HCT116 (cell line): ENCODE measurements at regions of chr6 and their contacts with region 1.

Region 1: DNA sequence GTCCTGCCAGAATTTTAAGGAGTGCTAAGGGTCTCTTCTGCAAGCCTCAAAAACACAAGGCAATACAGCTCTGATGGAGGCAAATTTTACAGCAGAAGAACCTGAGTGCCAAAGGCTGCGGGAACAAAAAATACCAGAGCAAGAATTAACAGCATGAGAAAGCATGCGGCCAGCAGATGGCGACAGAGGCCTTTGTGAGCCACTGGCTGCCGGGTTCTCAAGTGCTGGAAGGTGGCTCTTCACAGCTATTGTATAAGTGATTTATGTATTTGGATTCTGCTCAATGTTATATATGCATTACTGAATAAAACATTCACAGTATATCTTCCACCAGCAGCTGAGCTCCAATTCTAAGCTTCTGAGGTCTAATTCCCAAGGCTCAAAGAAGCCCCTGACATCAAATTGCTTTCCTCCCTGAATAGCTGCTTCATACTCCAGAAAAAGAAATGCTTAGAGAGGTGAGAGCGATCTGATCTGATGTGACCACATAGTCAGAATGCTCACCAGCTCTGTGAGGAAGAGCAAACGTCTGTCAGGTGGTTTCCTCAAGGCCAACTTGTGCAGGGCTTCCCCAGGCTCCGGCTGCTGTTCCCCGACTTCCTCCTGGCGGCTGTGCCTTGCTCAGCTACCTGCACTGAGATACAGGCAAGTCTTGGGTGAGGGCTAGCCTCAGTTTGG is 58.6 kb downstream of the PPP1R3G start:
- DNase-seq: peak; percentile 46
- ATAC-seq: peak; percentile 83
- H3K4me3 ChIP-seq: no peak overlapping the region
- H3K27ac ChIP-seq: no peak overlapping the region
- H3K4me1 ChIP-seq: no peaks in the 10 kb centered on the region
- H3K27me3 ChIP-seq: no peaks in the 10 kb centered on the region
- CTCF ChIP-seq: peak; percentile 73 to 96 (median 85)
- POLR2A ChIP-seq: no peak
- RAD21 ChIP-seq: peak; percentile 91

Region 2: DNA sequence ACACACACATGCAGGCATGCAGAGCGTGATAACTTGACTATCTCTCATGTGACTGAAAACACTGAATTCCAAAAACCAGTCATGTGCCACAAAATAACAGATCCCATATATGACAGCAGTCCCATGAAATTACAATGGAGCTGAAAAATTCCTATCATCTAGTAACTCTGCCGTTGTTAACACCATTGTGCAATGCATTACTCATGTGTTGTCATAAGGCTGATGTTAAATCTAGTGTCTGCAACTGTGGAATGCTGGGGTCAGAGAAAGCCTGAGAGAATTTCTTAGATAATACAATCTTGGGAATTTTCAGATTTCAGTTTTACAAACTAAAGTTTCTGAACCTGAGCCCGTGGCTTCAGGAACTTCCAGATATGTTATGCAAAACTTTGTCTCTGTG is 46.7 kb after region 1 on chr6:
- CTCF ChIA-PET with region 1: no interaction called
- POLR2A ChIA-PET with region 1: no interaction called
- RAD21 ChIA-PET with region 1: no interaction called
- intact Hi-C with region 1: no loop called
- DNase-seq: no peak
- ATAC-seq: no peak
- H3K4me3 ChIP-seq: no peak overlapping the region
- H3K27ac ChIP-seq: no peak overlapping the region
- H3K4me1 ChIP-seq: peaks cover 0 to 5% of the 10 kb centered on the region in 2 experiments; a peak in 1 of 4 replicates
- H3K27me3 ChIP-seq: no peaks in the 10 kb centered on the region
- CTCF ChIP-seq: no peak
- POLR2A ChIP-seq: no peak
- RAD21 ChIP-seq: no peak

Region 3: DNA sequence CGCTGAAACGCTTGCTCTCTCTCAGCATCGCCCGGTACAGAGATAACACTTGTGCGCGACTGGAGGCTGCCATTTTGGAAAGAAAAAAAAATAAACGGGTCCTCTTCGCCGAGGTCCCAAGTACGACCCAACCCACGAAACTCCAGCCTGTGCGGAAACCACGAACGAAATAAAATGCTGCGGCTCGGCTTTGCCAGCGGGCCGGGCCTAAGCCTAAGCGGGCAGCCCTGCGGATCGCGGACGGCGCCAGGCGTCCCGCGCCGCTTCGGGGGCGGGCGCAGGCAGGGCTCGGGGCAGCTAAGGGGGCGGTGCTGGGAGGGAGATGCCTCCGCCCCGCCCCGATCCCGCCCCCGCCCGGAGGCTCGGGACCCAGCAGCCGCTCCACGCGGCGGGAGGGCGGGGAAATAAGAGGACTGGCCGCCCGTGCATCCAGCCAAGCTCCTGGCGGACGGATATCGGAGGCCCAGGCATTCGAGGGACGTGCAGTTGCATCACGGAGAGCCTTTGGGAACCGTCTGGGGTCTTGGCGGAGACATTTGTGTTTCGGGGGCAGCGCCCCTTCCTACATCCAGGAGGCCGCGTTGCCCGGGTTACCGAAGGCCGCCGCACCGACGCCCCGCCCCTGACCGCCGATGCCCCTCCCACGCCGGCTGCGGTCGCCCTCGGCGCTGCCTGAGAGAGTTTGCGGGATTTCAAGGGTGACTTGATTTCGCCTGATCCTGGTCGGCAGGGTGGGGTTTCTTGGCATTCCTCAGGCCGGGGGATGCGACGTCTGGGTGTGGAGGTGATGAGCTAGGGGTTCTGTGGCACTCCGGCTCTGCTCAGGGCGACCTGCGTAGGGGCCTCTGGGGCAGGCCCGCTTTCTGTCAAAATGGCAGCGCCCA is 117.1 kb after region 1 on chr6 and contains the starts of genes FARS2 and LYRM4:
- CTCF ChIA-PET with region 1: no interaction called
- POLR2A ChIA-PET with region 1: no interaction called
- RAD21 ChIA-PET with region 1: interaction called in 1 of 2 experiments, 5 read pairs
- intact Hi-C with region 1: loop called (anchors 2 kb)
- DNase-seq: peak; percentile 72
- ATAC-seq: peak; percentile 80
- H3K4me3 ChIP-seq: peak within 1 kb of the TSS; percentile 77 to 92
- H3K27ac ChIP-seq: peak within 1 kb of the TSS; percentile 97
- H3K4me1 ChIP-seq: peaks cover 9 to 14% of the 10 kb centered on the region in 2 experiments
- H3K27me3 ChIP-seq: no peaks in the 10 kb centered on the region
- CTCF ChIP-seq: peak in 1 of 3 experiments; percentile 22; a peak in 2 of 6 replicates
- POLR2A ChIP-seq: no peak
- RAD21 ChIP-seq: no peak
- total RNA-seq, gene FARS2: 13.8 TPM
- total RNA-seq, gene LYRM4: 30.1 TPM

Region 4: DNA sequence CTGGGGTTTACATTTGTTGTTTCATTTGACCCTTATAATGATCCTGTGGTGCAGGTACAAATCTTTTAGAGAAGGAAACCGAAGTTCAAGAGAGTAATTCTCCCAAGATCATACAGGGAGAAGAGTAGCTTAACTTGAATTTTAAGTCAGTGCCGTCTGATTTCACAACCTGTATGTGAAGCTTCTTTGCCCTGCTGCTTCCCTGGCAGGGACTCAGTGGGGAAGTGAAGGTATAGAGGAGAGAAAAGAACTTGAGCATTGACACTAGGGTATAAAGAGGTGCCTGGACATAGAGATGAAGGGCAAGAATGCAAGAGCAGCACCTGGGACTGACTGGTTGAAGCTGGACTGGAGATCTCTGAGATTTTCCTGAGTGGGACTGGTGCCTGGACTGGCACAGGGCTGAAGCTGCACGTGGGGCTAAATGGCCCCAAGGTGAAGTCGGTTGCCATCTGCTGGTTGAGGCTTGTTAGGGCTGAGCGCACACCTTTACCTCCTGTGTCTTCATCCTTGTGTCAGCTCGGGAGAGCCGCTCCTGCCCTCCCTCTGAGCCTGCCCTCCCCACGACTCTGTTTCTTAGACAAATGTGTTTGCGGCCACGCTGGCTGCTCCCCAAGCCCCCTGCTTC is 159.3 kb after region 1 on chr6:
- CTCF ChIA-PET with region 1: interaction called, 26 read pairs
- POLR2A ChIA-PET with region 1: no interaction called
- RAD21 ChIA-PET with region 1: interaction called in 1 of 2 experiments, 3 read pairs
- intact Hi-C with region 1: loop called (anchors 1 kb)
- DNase-seq: peak; percentile 42
- ATAC-seq: peak; percentile 99
- H3K4me3 ChIP-seq: no peak overlapping the region
- H3K27ac ChIP-seq: no peak overlapping the region
- H3K4me1 ChIP-seq: peaks cover 0 to 6% of the 10 kb centered on the region in 2 experiments; a peak in 1 of 4 replicates
- H3K27me3 ChIP-seq: no peaks in the 10 kb centered on the region
- CTCF ChIP-seq: peak; percentile 42 to 79 (median 69); a peak in 5 of 6 replicates
- POLR2A ChIP-seq: no peak
- RAD21 ChIP-seq: peak; percentile 55

Region 5: DNA sequence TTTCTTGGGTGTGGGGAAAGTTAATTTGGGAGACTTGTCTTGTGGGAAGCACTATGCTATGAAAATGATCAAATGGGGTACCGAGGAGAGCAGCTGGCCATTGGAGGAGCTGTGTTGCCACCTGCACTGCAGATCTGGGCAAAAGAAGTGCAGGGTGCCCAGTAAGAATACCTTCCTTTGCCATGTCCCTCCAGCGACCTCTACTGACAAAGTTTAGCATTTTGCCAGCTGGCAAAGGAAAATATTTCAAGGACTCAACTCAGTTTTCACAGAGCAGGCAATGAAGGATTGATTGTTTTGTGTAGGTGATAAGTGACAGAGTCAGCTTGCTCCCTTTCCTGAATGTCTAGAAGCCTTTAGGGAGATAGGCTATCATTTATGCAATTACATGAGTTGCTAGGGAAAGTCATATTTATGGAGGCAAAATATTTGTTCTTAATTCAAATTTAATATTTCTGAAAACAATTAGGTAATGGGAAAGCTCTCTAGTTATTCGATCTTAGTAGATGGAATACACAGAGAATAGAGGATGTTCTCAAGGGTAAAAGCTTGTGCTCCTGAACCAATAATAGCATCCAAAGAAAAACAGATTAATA is 236.0 kb after region 1 on chr6:
- CTCF ChIA-PET with region 1: interaction called, 20 read pairs
- POLR2A ChIA-PET with region 1: no interaction called
- RAD21 ChIA-PET with region 1: interaction called in 1 of 2 experiments, 6 read pairs
- intact Hi-C with region 1: no loop called
- DNase-seq: peak; percentile 24
- ATAC-seq: peak; percentile 73
- H3K4me3 ChIP-seq: no peak overlapping the region
- H3K27ac ChIP-seq: no peak overlapping the region
- H3K4me1 ChIP-seq: peaks cover 0 to under 1% of the 10 kb centered on the region in 2 experiments; a peak in 1 of 4 replicates
- H3K27me3 ChIP-seq: no peaks in the 10 kb centered on the region
- CTCF ChIP-seq: peak; percentile 56 to 71 (median 64); a peak in 5 of 6 replicates
- POLR2A ChIP-seq: no peak
- RAD21 ChIP-seq: peak; percentile 73